ENCODE measurements at regions of chr2 and their contacts with region 1.

Region 1: GRCh38 chr2:105235388-105236054 is 6.0 kb upstream of the GPR45 start:
- DNase-seq: peak; percentile 89 to 94
- H3K4me3 ChIP-seq: no peak overlapping the region
- H3K27ac ChIP-seq: no peak overlapping the region
- H3K4me1 ChIP-seq: peaks cover 0 to 4% of the 10 kb centered on the region in 2 donors
- H3K27me3 ChIP-seq: no peaks in the 10 kb centered on the region
- CTCF ChIP-seq: peak; percentile 51 to 80 (median 75)
- POLR2A ChIP-seq: no peak

Region 2: GRCh38 chr2:105114551-105114950 is 121.0 kb before region 1 on chr2:
- intact Hi-C with region 1: loop called (anchors 2 kb)
- DNase-seq: peak in 1 of 2 donors; percentile 11
- H3K4me3 ChIP-seq: no peak overlapping the region
- H3K27ac ChIP-seq: no peak overlapping the region
- H3K4me1 ChIP-seq: no peaks in the 10 kb centered on the region
- H3K27me3 ChIP-seq: no peaks in the 10 kb centered on the region
- CTCF ChIP-seq: peak; percentile 47 to 95 (median 64)
- POLR2A ChIP-seq: no peak